GM12878 (cell line): ENCODE measurements at regions of chr7 and their contacts with region 1.

Region 1: DNA sequence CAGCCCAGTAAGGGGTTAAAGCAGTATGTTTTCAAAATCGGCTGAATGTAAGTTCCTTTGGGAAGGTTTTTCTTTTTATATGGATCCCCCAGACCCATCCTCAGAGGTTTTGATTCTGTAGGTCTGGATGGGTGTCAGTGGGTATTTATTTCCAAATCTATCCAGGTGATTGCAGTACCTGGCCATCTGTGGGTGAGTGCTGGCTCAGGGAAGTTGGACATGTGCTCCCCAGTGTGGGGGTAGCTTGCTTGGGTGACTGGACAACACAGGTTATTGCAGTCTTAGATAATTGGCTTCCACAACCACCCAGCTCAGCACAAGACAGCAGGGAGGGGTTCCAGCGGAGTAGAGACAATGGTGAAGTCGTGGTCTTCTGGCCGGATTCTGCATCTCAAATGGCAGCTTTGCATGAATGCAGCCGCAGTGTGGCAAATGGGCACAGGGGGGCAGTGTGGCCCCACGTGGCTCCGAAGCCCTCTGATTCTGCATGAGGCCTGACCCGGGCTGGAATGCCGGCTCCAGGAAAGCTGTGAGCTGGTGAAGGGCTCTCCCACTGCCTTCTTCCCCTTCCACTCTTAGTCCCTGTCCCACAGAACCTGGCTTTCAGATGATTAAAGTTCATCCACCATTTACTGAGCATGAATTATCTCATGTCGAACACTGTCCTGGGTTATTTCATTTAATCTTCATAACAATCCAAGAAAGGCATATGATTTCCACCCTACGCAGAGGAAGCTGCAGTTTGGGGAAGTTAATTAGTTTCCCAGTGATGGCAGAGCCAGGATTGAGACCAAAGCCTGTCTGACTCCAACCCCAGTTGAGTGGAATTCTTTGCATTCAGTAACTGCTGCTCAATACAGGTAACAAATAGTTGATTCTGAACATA is 64.5 kb upstream of the SYPL1 start:
- DNase-seq: no peak
- ATAC-seq: peak; percentile 76
- H3K4me3 ChIP-seq: no peak overlapping the region
- H3K27ac ChIP-seq: no peak overlapping the region
- H3K4me1 ChIP-seq: peaks cover 12% of the 10 kb centered on the region
- H3K27me3 ChIP-seq: no peaks in the 10 kb centered on the region
- CTCF ChIP-seq: peak; percentile 95 to 98 (median 96)
- EP300 ChIP-seq: no peak
- POLR2A ChIP-seq: no peak
- RAD21 ChIP-seq: peak; percentile 96

Region 2: GRCh38 chr7:105830391-105831301 is 346.0 kb before region 1 on chr7:
- CTCF ChIA-PET with region 1: no interaction called
- POLR2A ChIA-PET with region 1: no interaction called
- RAD21 ChIA-PET with region 1: no interaction called
- SMC1A ChIA-PET with region 1: no interaction called
- in situ Hi-C with region 1: no loop called
- intact Hi-C with region 1: no loop called
- DNase-seq: no peak
- ATAC-seq: no peak
- H3K4me3 ChIP-seq: no peak overlapping the region
- H3K27ac ChIP-seq: no peak overlapping the region
- H3K4me1 ChIP-seq: no peaks in the 10 kb centered on the region; the same call in 1 of the 2 replicates
- H3K27me3 ChIP-seq: peaks cover 2 to 4% of the 10 kb centered on the region in 2 experiments; a peak in 3 of 4 replicates
- CTCF ChIP-seq: no peak
- EP300 ChIP-seq: no peak
- POLR2A ChIP-seq: no peak
- RAD21 ChIP-seq: no peak

Region 3: GRCh38 chr7:105990726-105991453 is 185.8 kb before region 1 on chr7:
- CTCF ChIA-PET with region 1: no interaction called
- POLR2A ChIA-PET with region 1: no interaction called
- RAD21 ChIA-PET with region 1: no interaction called
- SMC1A ChIA-PET with region 1: no interaction called
- in situ Hi-C with region 1: no loop called
- intact Hi-C with region 1: no loop called
- DNase-seq: no peak
- ATAC-seq: no peak
- H3K4me3 ChIP-seq: no peak overlapping the region
- H3K27ac ChIP-seq: no peak overlapping the region
- H3K4me1 ChIP-seq: no peaks in the 10 kb centered on the region
- H3K27me3 ChIP-seq: peaks cover 0 to 3% of the 10 kb centered on the region in 2 experiments; a peak in 2 of 4 replicates
- CTCF ChIP-seq: no peak
- EP300 ChIP-seq: no peak
- POLR2A ChIP-seq: no peak
- RAD21 ChIP-seq: no peak

Region 4: DNA sequence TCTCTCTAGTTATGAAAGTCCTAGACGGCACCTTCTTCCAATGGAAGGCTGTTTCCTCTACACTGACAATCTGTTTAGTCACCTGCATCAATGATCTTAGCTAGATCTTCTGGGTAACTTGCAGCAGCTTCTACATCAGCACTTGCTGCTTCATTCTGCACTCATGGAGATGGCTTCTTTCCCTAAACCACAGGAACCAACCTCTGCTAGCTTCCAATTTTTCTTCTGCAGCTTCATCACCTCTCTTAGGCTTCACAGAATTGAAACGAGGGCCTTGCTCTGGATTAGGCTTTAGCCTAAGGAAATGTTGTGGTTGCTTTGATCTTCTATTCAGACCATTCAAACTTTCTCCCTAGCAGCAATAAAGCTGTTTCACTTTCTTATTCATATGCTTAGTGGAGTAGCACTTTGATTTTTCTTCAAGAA is 83.5 kb after region 1 on chr7:
- CTCF ChIA-PET with region 1: interaction called, 7 read pairs
- POLR2A ChIA-PET with region 1: no interaction called
- RAD21 ChIA-PET with region 1: interaction called, 21 read pairs
- SMC1A ChIA-PET with region 1: interaction called, 9 read pairs
- in situ Hi-C with region 1: no loop called
- intact Hi-C with region 1: loop called (anchors 5 kb)
- DNase-seq: no peak
- ATAC-seq: peak; percentile 28
- H3K4me3 ChIP-seq: no peak overlapping the region
- H3K27ac ChIP-seq: no peak overlapping the region
- H3K4me1 ChIP-seq: peaks cover 18% of the 10 kb centered on the region
- H3K27me3 ChIP-seq: no peaks in the 10 kb centered on the region
- CTCF ChIP-seq: no peak
- EP300 ChIP-seq: no peak
- POLR2A ChIP-seq: no peak
- RAD21 ChIP-seq: no peak

Region 5: DNA sequence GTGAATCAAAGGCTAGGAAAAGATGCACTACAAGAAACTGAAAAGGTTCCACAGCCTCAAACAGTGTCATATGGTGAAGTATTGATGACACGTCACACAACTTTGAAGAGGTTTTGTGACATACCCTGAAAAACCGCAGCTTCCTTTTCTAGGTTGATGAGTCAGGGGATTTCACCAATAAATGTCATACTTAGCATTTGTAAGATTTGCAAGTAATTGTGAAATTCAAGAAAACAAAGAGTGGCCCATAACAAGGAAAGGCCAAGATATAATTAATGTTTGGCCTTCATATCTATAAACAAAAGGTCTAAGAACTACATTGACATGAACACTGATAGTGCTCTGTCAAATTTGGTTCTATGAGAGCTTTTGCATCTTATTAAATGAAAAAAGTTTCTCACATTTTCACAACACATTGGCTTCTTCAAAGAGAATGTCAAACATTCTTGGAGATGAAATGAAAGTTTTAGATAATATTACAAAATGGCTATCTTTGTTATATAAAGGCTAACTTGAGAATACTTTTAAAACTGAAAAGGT is 170.1 kb after region 1 on chr7:
- CTCF ChIA-PET with region 1: interaction called, 4 read pairs
- POLR2A ChIA-PET with region 1: interaction called, 3 read pairs
- RAD21 ChIA-PET with region 1: interaction called, 11 read pairs
- SMC1A ChIA-PET with region 1: interaction called, 25 read pairs
- in situ Hi-C with region 1: no loop called
- intact Hi-C with region 1: loop called (anchors 5 kb)
- DNase-seq: peak; percentile 92
- ATAC-seq: peak; percentile 86
- H3K4me3 ChIP-seq: no peak overlapping the region
- H3K27ac ChIP-seq: peak overlapping the region; percentile 80
- H3K4me1 ChIP-seq: peaks cover 20% of the 10 kb centered on the region
- H3K27me3 ChIP-seq: no peaks in the 10 kb centered on the region
- CTCF ChIP-seq: no peak
- EP300 ChIP-seq: peak; percentile 99
- POLR2A ChIP-seq: no peak
- RAD21 ChIP-seq: no peak

Region 6: DNA sequence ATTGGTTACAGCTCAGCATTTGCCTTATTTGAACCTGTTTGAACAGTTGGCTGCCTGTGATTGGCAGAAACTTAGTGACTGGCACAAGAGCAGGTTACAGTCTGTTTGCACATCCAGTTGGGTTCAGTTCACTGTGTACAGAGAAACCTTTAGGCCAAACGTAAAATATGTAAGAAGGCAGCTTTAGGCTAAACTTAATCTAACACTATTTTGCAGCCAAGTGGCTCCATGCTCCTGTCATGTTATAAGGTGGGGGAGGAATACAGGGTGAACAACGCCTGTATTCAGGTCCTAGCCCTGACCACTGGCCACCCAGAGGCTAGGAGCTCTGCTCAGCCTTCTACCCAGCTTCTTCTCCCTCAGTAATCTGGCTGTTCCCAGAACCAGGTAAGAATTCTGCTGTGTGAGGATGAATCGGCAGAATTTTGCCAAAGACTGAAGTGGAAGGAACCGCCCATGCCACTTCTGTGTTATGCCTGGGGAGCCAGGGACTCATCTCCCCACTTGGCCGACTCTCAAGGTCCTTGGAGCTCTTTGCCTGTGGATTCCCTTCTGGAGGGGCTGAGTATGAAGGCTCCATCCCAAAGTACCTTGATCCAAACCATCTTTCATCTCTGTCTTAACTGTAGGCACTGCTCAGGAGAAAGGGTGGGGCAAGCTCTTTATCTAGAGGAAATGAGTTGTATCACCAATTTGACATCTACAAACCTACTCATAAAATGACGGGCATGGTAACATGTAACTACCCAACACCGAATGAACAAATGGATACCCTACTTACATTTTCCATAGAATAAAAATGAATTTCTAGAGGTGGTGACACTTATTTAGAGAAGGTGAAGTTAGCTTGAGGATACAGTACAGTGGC is 272.6 kb after region 1 on chr7:
- CTCF ChIA-PET with region 1: interaction called, 16 read pairs
- POLR2A ChIA-PET with region 1: no interaction called
- RAD21 ChIA-PET with region 1: interaction called, 4 read pairs
- SMC1A ChIA-PET with region 1: interaction called, 38 read pairs
- in situ Hi-C with region 1: no loop called
- intact Hi-C with region 1: no loop called
- DNase-seq: no peak
- ATAC-seq: no peak
- H3K4me3 ChIP-seq: no peak overlapping the region
- H3K27ac ChIP-seq: no peak overlapping the region
- H3K4me1 ChIP-seq: no peaks in the 10 kb centered on the region
- H3K27me3 ChIP-seq: no peaks in the 10 kb centered on the region
- CTCF ChIP-seq: no peak
- EP300 ChIP-seq: no peak
- POLR2A ChIP-seq: no peak
- RAD21 ChIP-seq: no peak

Region 7: GRCh38 chr7:106520962-106521940 is 344.6 kb after region 1 on chr7:
- CTCF ChIA-PET with region 1: interaction called, 16 read pairs
- POLR2A ChIA-PET with region 1: no interaction called
- RAD21 ChIA-PET with region 1: interaction called, 14 read pairs
- SMC1A ChIA-PET with region 1: interaction called, 12 read pairs
- in situ Hi-C with region 1: no loop called
- intact Hi-C with region 1: loop called (anchors 5 kb)
- DNase-seq: no peak
- ATAC-seq: peak; percentile 71
- H3K4me3 ChIP-seq: no peak overlapping the region
- H3K27ac ChIP-seq: no peak overlapping the region
- H3K4me1 ChIP-seq: no peaks in the 10 kb centered on the region
- H3K27me3 ChIP-seq: no peaks in the 10 kb centered on the region; a peak in 1 of 4 replicates
- CTCF ChIP-seq: peak; percentile 13 to 35 (median 26); a peak in 3 of 6 replicates
- EP300 ChIP-seq: no peak
- POLR2A ChIP-seq: no peak
- RAD21 ChIP-seq: 0 out of 2 replicates have a peak, but pooled peaks have one; percentile 18

Region 8: DNA sequence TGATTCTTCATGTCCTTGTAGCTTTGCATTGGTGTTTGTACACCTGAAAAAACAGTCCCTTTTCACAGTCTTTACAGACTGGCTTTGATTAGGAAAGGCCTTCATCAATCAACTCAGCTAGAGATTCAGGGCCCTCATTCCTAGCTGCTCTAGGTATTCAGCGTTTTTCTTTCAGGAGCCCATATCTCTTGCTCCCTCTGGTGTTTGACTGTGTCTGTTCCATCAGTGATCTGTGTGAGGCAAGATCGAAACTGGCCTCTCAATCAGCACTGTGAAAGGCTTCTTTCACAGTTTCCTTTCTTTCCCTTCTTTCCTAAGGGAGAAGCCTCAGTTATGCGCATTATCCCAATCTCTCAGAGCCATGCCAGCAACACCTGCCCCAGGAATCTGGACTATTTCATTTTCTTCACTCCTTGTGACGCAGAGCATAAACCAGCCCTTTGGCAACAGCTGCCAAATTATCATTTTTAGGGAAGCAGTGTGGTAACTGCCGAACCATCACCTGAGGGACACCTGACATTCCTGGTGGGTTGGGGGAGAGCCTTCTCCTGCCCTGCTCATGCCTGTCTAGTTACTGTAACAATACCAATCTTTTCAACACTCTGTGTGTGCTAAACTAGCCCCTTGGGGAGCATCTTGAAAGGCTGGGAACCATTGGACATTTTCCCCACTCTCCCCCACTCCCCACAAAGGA is 560.0 kb after region 1 on chr7:
- CTCF ChIA-PET with region 1: interaction called, 39 read pairs
- POLR2A ChIA-PET with region 1: no interaction called
- RAD21 ChIA-PET with region 1: interaction called, 38 read pairs
- SMC1A ChIA-PET with region 1: interaction called, 7 read pairs
- in situ Hi-C with region 1: loop called (anchors 5 kb)
- intact Hi-C with region 1: loop called (anchors 1 kb)
- DNase-seq: peak; percentile 48
- ATAC-seq: peak; percentile 98
- H3K4me3 ChIP-seq: no peak overlapping the region
- H3K27ac ChIP-seq: no peak overlapping the region
- H3K4me1 ChIP-seq: peaks cover 15% of the 10 kb centered on the region
- H3K27me3 ChIP-seq: no peaks in the 10 kb centered on the region
- CTCF ChIP-seq: peak; percentile 75 to 86 (median 80)
- EP300 ChIP-seq: no peak
- POLR2A ChIP-seq: no peak
- RAD21 ChIP-seq: peak; percentile 97